ENCODE measurements at regions of chr12 and their contacts with region 1.

Region 1: DNA sequence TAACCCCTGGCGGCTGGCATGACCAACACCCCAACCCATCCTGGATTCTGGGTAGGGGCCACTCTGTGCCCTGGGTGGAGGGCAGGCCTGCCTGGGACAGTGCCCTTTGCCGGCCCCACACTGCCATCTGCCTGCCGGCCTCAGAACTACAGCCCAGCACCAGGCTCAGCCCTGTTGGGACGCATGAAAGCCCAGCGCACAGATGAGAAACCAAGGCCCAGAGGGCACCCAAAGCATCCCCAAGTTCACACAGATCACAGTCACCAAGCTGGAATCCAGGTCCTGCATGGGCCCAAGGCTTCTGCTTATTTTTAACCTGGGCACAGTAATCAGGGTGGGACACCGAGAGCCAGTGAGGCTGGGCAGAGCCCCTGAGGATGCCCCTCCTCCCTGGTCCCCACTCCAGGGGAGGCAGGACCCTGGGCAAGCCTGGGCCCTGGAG is 26.2 kb downstream of the RFLNA start:
- DNase-seq: peak; percentile 33 to 99
- H3K4me3 ChIP-seq: no peak overlapping the region
- H3K27ac ChIP-seq: no peak overlapping the region
- H3K4me1 ChIP-seq: peaks cover 6 to 21% (median 14%) of the 10 kb centered on the region in 4 experiments
- H3K27me3 ChIP-seq: no peaks in the 10 kb centered on the region; a peak in 1 of 7 replicates
- CTCF ChIP-seq: peak; percentile 92 to 96 (median 95)
- EP300 ChIP-seq: no peak
- POLR2A ChIP-seq: no peak
- RAD21 ChIP-seq: peak; percentile 96 to 97

Region 2: GRCh38 chr12:124044809-124045321 is 276.2 kb before region 1 on chr12:
- CTCF ChIA-PET with region 1: interaction called, 10 read pairs
- POLR2A ChIA-PET with region 1: no interaction called
- DNase-seq: no peak
- H3K4me3 ChIP-seq: no peak overlapping the region
- H3K27ac ChIP-seq: no peak overlapping the region
- H3K4me1 ChIP-seq: no peaks in the 10 kb centered on the region; a peak in 2 of 7 replicates
- H3K27me3 ChIP-seq: no peaks in the 10 kb centered on the region
- CTCF ChIP-seq: no peak
- EP300 ChIP-seq: no peak
- POLR2A ChIP-seq: no peak
- RAD21 ChIP-seq: no peak

Region 3: DNA sequence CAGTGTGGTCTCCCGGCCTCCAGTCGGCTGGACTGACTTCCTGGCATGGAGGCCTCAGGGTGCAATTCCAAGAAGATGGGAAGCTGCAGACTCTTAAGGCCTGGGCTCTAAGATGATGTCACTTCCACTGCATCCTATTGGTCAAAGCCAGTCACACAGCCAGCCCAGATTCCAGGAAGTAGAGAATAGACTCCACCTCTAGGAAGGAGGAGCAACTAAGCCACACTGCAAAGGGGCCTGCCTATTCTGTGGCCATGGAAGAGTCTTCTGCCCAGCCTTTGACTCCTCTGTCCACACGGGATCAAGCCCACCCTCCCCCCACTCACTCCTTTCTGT is 130.1 kb before region 1 on chr12:
- CTCF ChIA-PET with region 1: no interaction called
- POLR2A ChIA-PET with region 1: no interaction called
- DNase-seq: no peak
- H3K4me3 ChIP-seq: no peak overlapping the region
- H3K27ac ChIP-seq: no peak overlapping the region
- H3K4me1 ChIP-seq: peaks cover 0 to 9% (median 0%) of the 10 kb centered on the region in 4 experiments; a peak in 4 of 7 replicates
- H3K27me3 ChIP-seq: no peaks in the 10 kb centered on the region; a peak in 1 of 7 replicates
- CTCF ChIP-seq: no peak
- EP300 ChIP-seq: no peak
- POLR2A ChIP-seq: no peak
- RAD21 ChIP-seq: no peak

Region 4: DNA sequence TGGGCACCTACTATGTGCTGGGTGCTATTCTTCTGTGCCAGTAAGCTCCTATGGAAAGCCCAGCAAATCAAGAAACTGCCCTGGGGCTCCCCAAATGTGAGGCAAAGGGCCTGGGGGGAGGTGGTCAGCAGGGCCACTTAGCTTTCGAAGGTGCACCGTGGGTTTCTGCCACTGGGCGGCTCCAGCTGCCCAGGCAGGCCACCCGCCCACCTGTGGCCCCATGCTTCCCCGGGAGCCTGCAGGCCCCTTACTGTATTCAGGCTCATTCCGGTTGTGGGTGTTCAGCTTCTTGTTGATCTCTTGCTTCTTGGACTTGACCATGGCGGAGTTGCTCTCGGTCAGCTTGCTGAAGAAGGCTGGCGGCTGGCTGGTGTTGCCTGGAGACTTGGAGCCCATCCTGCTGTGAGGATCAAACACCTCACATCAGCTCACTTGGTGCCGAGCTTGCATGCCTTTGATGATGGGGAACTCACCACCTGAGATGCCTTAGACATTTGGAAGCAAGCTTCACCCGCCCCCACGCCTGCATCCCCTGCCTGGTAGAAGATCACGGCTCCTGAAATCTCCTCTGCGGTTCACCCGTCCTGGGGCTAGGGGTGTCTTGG is 11.1 kb after region 1 on chr12:
- CTCF ChIA-PET with region 1: interaction called, 20 read pairs
- POLR2A ChIA-PET with region 1: no interaction called
- DNase-seq: no peak
- H3K4me3 ChIP-seq: no peak overlapping the region
- H3K27ac ChIP-seq: 0 out of 2 replicates have a peak overlapping the region, but pooled peaks have one; percentile 4
- H3K4me1 ChIP-seq: peaks cover 0 to 4% (median 0%) of the 10 kb centered on the region in 4 experiments; a peak in 2 of 7 replicates
- H3K27me3 ChIP-seq: no peaks in the 10 kb centered on the region
- CTCF ChIP-seq: peak in 2 of 3 experiments; percentile 51 to 55; a peak in 3 of 4 replicates
- EP300 ChIP-seq: no peak
- POLR2A ChIP-seq: no peak
- RAD21 ChIP-seq: peak; percentile 61 to 70

Region 5: DNA sequence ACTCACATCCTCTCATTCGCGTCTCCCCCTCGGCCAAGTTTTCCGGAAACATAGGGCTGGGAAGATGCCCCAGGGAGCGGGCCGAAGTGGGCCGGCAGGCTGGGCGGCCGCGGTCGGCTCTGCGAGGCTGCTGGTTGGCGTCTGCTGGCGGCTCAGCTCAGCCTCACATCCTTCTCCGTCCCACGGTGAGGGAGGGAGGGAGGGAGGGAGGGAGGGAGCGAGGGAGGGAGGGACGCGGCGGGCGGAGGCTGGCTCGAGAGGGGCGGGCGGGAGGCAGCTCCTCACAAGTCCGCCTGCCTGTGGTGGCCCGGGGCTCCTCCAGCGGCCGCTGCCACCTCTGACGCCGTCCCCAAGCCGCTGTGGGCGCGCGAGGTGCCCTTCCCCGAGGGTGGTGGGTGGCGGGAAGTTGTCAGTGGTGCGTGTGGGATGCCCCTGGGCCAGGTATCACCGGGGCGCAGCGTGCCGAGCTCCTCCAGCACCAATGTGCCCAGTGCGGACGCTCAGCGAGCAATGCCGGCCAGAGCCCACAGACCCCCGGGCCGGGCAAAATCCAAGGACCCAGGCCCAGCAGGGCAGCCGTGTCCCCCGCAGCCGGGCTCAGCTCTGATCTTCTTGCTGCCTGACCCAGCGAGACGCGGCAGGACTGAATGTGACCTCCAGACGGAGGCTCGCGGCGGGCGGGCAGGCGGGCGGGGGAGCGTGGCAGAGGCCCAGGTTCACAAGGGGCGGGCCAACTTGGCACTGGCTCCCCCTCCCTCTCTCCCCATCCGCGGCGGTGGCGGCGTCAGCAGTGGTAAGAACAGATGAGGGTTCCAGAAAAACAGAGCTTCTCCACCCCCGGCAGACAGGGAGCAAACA is 67.8 kb after region 1 on chr12:
- CTCF ChIA-PET with region 1: no interaction called
- POLR2A ChIA-PET with region 1: no interaction called
- DNase-seq: peak in 1 of 2 experiments; percentile 76
- H3K4me3 ChIP-seq: peak overlapping the region; percentile 38 to 73 (median 54)
- H3K27ac ChIP-seq: no peak overlapping the region
- H3K4me1 ChIP-seq: peaks cover 0 to 25% (median 17%) of the 10 kb centered on the region in 4 experiments; a peak in 6 of 7 replicates
- H3K27me3 ChIP-seq: no peaks in the 10 kb centered on the region
- CTCF ChIP-seq: no peak
- EP300 ChIP-seq: no peak
- POLR2A ChIP-seq: no peak
- RAD21 ChIP-seq: no peak

Region 6: DNA sequence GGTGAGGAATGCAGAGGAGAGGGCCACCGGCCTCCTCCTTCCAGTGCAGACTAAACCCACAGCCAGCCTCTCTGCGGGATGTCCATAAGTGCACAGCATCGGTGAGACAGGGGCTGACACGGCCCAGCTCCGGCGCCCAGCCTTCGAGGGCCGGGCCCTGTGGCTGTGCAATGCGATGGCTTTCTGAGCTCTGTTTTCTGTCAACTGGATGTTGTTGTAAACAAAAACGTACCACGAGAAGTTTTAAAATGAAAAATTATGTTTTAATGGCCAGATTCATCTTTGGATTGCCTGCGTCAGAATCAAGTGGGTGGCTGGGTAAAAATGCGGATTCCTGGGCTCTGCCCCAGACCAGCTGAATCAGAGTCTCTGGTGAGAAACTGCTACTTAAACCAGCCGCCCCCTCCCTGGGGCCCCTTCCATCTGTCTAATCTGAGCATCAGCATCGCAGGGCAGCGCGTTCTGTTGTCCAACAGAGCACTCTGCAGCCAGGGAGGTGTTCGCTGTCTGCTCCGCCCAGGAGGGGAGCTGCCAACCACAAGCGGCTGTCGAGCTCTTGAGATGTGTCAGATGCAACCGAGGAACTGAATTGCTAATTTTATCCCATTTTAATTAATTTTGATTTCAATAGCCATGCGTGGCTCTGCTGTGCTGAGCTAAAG is 107.2 kb after region 1 on chr12:
- CTCF ChIA-PET with region 1: no interaction called
- POLR2A ChIA-PET with region 1: no interaction called
- DNase-seq: no peak
- H3K4me3 ChIP-seq: no peak overlapping the region
- H3K27ac ChIP-seq: no peak overlapping the region
- H3K4me1 ChIP-seq: peaks cover 0 to 7% (median 5%) of the 10 kb centered on the region in 4 experiments; a peak in 6 of 7 replicates
- H3K27me3 ChIP-seq: no peaks in the 10 kb centered on the region
- CTCF ChIP-seq: no peak
- EP300 ChIP-seq: no peak
- POLR2A ChIP-seq: no peak
- RAD21 ChIP-seq: no peak

Region 7: GRCh38 chr12:124441443-124442194 is 120.6 kb after region 1 on chr12:
- CTCF ChIA-PET with region 1: no interaction called
- POLR2A ChIA-PET with region 1: no interaction called
- DNase-seq: no peak
- H3K4me3 ChIP-seq: no peak overlapping the region
- H3K27ac ChIP-seq: no peak overlapping the region
- H3K4me1 ChIP-seq: peaks cover 0 to 4% (median 3%) of the 10 kb centered on the region in 4 experiments; a peak in 4 of 7 replicates
- H3K27me3 ChIP-seq: no peaks in the 10 kb centered on the region
- CTCF ChIP-seq: no peak
- EP300 ChIP-seq: no peak
- POLR2A ChIP-seq: no peak
- RAD21 ChIP-seq: no peak